ENCODE measurements at regions of chr16 and their contacts with region 1.

Region 1: GRCh38 chr16:15949210-15950160 is at the start of gene ABCC1:
- DNase-seq: peak; percentile 40
- H3K4me3 ChIP-seq: peak within 1 kb of the TSS; percentile 71 to 87
- H3K27ac ChIP-seq: peak within 1 kb of the TSS; percentile 85 to 90
- H3K4me1 ChIP-seq: peaks cover 13% of the 10 kb centered on the region
- H3K27me3 ChIP-seq: no peaks in the 10 kb centered on the region
- CTCF ChIP-seq: peak in 2 of 4 experiments; percentile 4 to 20
- POLR2A ChIP-seq: no peak
- total RNA-seq, gene ABCC1: 33.4 to 87.7 TPM

Region 2: DNA sequence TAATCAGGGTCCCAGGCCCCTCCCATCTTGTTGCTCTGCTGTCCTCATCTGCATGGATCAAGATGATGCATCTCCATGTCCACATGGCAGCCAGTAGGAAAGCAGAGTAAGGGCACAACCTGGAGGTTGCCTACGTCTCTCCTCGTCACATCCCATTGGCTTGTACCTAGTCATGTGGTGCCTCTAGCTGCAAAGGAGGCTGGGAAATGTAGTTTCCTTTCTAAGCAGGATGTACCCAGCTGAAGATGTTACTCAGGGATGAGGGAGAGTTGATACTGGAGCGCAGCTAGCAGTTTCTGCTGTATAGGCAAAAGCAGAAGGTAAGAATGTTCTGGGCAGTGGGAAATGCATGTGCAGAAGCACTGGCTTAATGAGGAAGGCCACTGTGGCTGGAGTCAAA is 20.7 kb after region 1 on chr16:
- intact Hi-C with region 1: no loop called
- DNase-seq: no peak
- H3K4me3 ChIP-seq: no peak overlapping the region
- H3K27ac ChIP-seq: no peak overlapping the region
- H3K4me1 ChIP-seq: peaks cover 3% of the 10 kb centered on the region
- H3K27me3 ChIP-seq: no peaks in the 10 kb centered on the region
- CTCF ChIP-seq: no peak
- POLR2A ChIP-seq: no peak

Region 3: GRCh38 chr16:15996432-15997109 is 47.1 kb after region 1 on chr16:
- intact Hi-C with region 1: loop called (anchors 5 kb)
- DNase-seq: no peak
- H3K4me3 ChIP-seq: no peak overlapping the region
- H3K27ac ChIP-seq: no peak overlapping the region
- H3K4me1 ChIP-seq: no peaks in the 10 kb centered on the region
- H3K27me3 ChIP-seq: no peaks in the 10 kb centered on the region
- CTCF ChIP-seq: no peak
- POLR2A ChIP-seq: no peak

Region 4: GRCh38 chr16:16021988-16022682 is 72.7 kb after region 1 on chr16:
- intact Hi-C with region 1: loop called (anchors 5 kb)
- DNase-seq: peak; percentile 86
- H3K4me3 ChIP-seq: no peak overlapping the region
- H3K27ac ChIP-seq: peak overlapping the region; percentile 39 to 48
- H3K4me1 ChIP-seq: peaks cover 6% of the 10 kb centered on the region
- H3K27me3 ChIP-seq: no peaks in the 10 kb centered on the region
- CTCF ChIP-seq: no peak
- POLR2A ChIP-seq: no peak

Region 5: DNA sequence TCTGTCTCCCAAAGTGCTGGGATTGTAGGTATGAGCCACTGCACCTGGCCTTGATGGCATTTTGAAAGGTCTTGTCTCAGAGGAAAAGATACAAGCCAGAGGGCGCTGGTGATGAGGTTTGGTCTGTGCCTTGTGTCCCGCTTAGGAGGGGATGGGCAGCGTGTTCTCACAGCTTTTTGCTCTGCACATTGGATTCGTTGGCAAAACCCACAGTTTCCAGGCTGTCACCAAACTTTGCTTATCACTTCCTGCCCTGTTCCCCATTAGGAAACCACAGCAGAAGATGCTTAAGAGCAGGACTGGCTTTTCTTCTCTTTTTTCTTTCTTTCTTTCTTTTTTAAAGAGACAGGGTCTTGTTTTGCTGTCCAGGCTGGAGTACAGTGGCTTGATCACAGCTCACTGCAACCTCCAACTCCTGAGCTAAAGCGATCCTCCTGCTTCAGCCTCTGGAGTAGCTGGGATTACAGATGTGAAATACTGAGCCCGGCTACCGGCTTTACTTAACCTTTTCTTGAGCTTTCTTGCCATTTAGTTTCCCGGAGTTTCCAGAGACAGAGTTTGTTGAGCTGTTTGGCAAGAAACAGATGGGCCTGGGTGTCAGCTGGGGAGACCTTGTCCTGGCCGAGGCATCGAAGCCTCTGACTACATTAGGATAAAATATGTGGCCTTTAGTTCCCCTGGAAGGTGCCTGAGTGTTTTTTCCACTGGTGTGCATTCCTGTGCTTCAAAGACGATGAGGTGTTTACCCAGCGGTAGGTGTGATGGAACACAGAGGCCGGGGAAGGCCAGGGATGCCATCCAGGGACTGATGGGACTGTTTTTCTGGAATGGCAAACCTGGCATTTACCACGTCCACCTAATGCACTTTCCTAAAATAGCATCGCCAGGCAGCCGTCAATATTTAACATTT is 112.8 kb after region 1 on chr16:
- intact Hi-C with region 1: loop called (anchors 10 kb)
- DNase-seq: no peak
- H3K4me3 ChIP-seq: no peak overlapping the region
- H3K27ac ChIP-seq: peak overlapping the region; percentile 37 to 45
- H3K4me1 ChIP-seq: no peaks in the 10 kb centered on the region
- H3K27me3 ChIP-seq: no peaks in the 10 kb centered on the region
- CTCF ChIP-seq: no peak
- POLR2A ChIP-seq: no peak